ENCODE measurements at regions of chr2 and their contacts with region 1.

Region 1: DNA sequence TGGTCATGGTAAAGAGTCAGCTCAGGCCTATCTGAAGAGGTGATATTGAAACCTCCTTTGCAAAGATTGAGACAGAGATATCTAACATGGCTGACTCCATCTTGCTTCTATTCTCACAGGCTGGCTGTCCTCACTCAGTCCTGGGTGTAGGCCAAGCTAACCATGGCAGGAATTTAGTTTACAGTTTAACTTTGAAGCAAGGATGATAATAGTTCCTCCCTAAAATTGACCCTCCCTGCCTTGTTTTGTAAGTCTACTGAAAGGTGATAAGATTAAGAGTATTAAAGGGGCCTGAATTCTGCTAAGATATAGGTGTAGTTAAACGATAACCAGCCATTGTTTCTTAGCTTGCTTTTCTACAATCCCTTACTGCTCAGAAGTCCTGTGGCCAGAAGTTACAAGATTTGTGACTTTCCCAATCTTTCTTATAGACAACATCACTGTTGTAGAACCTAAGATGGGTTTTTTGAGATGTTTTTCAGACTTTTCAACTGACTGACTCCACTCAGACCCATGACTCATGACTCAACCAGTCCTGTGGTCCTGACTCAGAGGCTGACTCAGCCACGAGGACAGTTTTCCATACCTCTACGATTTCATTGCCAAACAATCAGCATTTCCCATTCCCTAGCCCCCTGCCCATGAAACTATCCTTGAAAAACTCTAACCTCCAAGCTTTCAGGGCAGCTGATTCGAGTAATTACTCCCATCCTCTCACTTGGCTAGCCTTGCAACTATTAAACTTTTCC is 195.7 kb upstream of the SESTD1 start:
- DNase-seq: no peak

Region 2: DNA sequence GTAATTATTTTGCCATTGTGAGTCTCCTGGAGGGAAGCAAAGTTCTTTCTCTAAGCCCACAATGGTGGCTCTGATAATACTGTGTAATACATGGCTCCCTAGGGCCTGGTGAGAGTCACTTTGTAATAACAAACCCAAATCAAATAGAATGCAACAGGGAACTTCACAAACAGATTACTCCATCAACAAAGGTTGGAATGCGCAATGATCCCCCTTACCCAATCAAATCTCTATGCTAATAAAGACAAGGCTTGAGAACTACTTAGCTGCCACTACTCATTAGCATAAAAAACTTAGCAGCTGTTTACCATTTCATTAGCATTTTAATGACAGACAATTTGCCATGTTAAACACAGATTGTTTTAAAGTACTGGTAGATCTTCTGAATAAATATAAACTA is 89.9 kb after region 1 on chr2:
- intact Hi-C with region 1: no loop called
- DNase-seq: no peak

Region 3: DNA sequence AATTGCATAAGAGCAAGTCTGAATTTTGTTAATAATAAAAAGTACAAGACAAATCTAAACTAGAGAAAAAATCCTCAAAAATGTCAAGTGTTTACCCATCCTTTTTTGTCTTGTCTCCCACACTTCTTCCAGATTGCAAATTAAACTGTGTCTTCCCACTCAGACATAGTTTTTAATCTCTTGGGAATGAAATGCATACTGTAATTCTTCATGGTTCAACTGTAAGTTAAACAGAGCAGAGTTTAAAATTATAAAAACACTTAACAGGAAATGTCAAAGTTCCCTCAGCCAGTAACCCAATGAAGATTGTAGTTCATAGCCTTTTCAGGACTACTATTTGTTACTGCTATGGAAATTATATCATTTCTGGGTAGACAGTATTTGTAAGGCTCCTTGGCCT is 1691.9 kb after region 1 on chr2:
- intact Hi-C with region 1: loop called in 1 of 2 experiments (anchors 10 kb)
- DNase-seq: no peak

Measured in posterior vena cava (tissue), 2 donors.